IMR-90 (cell line): ENCODE measurements at regions of chr7 and their contacts with region 1.

Region 1: GRCh38 chr7:116122972-116123595 is 87.3 kb upstream of the TES start:
- DNase-seq: peak; percentile 66
- ATAC-seq: peak; percentile 53; the same call in 1 of the 2 replicates
- H3K4me3 ChIP-seq: no peak overlapping the region
- H3K27ac ChIP-seq: no peak overlapping the region
- H3K4me1 ChIP-seq: peaks cover 3% of the 10 kb centered on the region
- H3K27me3 ChIP-seq: no peaks in the 10 kb centered on the region
- CTCF ChIP-seq: peak; percentile 81
- POLR2A ChIP-seq: no peak
- RAD21 ChIP-seq: peak; percentile 69

Region 2: DNA sequence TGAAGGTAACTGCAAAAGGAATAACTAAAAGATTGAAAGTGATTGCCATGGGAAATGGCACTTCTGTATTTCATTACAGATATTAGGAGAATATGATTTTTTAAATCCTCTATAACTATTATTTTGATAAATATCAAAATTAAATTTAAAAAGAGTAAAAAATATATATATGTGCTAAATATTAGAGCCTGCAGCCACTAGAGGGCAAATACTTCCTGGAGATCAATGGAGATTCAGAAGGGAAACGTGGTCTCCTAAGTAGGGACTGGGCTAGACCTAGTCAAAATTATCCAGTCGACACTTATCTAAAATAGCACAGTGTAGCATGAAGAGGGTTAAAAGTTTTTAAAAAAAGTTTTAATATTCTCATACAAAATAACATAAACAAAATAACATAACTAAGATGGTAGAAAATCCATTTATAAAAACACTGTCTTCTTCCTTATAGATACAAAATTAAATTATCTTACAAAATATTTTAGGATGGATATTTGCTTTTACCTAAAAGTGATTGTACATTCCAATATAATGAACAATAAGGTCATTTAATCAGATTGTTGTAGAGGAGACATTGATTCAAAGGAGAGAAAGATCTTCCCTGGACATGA is 766.8 kb before region 1 on chr7:
- CTCF ChIA-PET with region 1: no interaction called
- POLR2A ChIA-PET with region 1: no interaction called
- dilution Hi-C with region 1: no loop called
- in situ Hi-C with region 1: no loop called
- intact Hi-C with region 1: loop called (anchors 10 kb)
- DNase-seq: peak; percentile 44
- ATAC-seq: no peak
- H3K4me3 ChIP-seq: no peak overlapping the region
- H3K27ac ChIP-seq: no peak overlapping the region
- H3K4me1 ChIP-seq: peaks cover 4% of the 10 kb centered on the region; the same call in 1 of the 2 replicates
- H3K27me3 ChIP-seq: no peaks in the 10 kb centered on the region
- CTCF ChIP-seq: peak; percentile 48
- POLR2A ChIP-seq: no peak
- RAD21 ChIP-seq: peak; percentile 42

Region 3: DNA sequence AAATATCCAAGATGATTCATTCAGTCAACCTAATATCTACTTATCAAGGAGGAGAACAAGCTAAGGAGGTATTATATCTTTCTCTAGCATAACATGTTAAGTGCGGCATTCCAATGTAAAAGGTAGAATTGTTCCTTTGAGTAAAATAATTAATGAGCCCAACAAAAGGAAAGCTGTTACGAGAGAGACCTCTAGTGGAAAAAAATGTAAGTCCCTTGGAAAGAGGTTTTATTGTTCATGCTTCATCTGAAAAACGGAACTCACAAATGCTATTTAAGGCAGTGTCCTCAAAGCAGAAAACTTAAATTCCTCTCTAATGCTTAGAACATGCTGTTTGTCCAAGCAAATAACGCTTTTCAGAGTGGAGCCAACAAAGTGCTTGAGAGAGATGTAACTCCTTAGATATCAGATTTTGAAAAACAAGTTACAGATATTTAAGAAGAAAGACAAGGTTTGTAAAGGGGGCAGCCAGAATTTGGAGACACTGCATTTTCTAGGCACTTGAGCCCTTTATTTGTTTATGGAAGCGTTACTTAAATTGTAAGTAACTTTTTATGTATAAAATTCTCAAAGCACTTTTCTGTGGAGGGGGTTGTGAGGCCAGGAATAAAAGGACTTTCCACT is 212.4 kb before region 1 on chr7:
- CTCF ChIA-PET with region 1: interaction called, 3 read pairs
- POLR2A ChIA-PET with region 1: no interaction called
- dilution Hi-C with region 1: no loop called
- in situ Hi-C with region 1: no loop called
- intact Hi-C with region 1: loop called (anchors 2 kb)
- DNase-seq: peak; percentile 38
- ATAC-seq: peak; percentile 77
- H3K4me3 ChIP-seq: no peak overlapping the region
- H3K27ac ChIP-seq: no peak overlapping the region
- H3K4me1 ChIP-seq: no peaks in the 10 kb centered on the region
- H3K27me3 ChIP-seq: no peaks in the 10 kb centered on the region
- CTCF ChIP-seq: peak; percentile 60
- POLR2A ChIP-seq: no peak
- RAD21 ChIP-seq: peak; percentile 65

Region 4: DNA sequence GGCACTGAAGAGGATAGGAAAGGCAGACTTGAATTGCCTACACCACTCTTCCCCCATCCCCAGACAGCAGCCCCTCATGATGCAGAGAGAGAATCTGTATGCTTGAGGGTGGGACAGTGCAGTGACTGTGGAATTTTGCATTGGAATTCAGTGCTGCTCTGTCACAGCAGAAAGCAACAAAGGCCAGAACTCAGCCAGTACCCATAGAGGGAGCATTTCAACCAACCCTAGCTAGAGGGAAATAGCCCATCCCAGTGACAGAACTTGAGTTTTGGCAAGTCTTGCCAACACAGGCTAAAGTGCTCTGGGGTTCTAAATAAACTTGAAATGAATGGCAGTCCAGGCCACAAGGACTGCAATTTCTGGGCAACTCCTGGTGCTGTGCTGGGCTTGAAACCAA is 167.7 kb after region 1 on chr7:
- CTCF ChIA-PET with region 1: no interaction called
- POLR2A ChIA-PET with region 1: no interaction called
- dilution Hi-C with region 1: no loop called
- in situ Hi-C with region 1: no loop called
- intact Hi-C with region 1: no loop called
- DNase-seq: no peak
- ATAC-seq: peak; percentile 70
- H3K4me3 ChIP-seq: no peak overlapping the region
- H3K27ac ChIP-seq: no peak overlapping the region
- H3K4me1 ChIP-seq: peaks cover 2% of the 10 kb centered on the region
- H3K27me3 ChIP-seq: no peaks in the 10 kb centered on the region
- CTCF ChIP-seq: no peak
- POLR2A ChIP-seq: no peak
- RAD21 ChIP-seq: no peak